Naive thymus-derived CD4-positive, alpha-beta T cell (primary cell): ENCODE measurements at regions of chr13 and their contacts with region 1.

Region 1: DNA sequence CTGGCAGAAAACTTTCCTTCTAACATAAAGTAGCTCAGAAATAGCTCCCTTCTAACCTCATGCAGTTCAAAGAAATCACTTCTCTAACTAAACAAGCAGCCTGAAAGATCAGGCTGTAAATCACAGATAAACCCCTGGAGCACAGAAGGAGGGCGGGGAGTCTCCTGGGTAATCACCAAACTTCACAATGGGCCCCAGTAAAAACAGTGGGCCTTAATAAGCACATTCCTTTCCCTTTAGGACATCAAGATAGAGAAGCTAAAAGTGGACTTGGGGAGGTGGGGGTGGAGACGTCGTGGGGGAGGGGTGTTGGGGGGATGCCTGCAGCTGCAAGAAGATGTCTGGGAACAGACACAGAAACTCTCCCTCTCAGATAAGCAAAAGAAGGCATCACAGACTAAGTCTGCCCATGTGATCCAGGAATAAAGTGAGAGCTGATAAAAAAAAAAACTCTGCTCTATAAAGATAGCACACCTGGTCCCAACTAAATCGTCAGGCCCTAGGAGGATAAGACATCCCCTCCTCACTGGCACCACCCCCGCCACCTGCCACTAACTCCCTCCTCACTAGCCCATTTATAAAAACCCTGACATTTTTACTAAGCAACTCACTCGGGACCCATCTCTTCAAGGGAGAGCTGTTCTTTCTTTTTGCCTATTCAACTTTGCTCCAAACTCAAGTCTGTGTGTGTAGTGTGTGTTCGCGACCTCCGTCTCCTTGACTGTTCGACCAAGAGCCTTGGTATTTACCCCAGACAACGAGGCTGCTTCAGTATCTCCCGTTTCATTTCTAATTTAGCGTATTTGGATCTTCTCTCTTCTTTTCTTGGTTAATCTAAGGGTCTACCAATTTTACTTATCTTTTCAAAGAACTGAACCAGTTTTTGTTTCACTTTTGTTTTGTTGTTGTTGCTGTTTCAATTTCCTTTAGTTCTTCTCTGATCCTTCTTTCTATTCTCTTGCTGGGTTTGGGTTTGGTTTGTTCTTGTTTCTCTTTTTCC is 31.7 kb downstream of the DNAJC15 start:
- DNase-seq: peak in 7 of 9 donors; percentile 30 to 58 (median 49)
- ATAC-seq: peak; percentile 52
- H3K4me3 ChIP-seq: peak overlapping the region; percentile 62
- H3K4me3 Mint-ChIP-seq: no peak overlapping the region
- H3K27ac ChIP-seq: peak overlapping the region; percentile 78
- H3K27ac Mint-ChIP-seq: no peak overlapping the region
- H3K4me1 ChIP-seq: peaks cover 28 to 43% of the 10 kb centered on the region in 2 donors
- H3K4me1 Mint-ChIP-seq: peaks cover 5 to 38% (median 22%) of the 10 kb centered on the region in 7 donors
- H3K27me3 ChIP-seq: no peaks in the 10 kb centered on the region
- H3K27me3 Mint-ChIP-seq: no peaks in the 10 kb centered on the region

Region 2: GRCh38 chr13:42707586-42707985 is 347.5 kb before region 1 on chr13:
- CTCF ChIA-PET with region 1: no interaction called
- POLR2A ChIA-PET with region 1: no interaction called
- intact Hi-C with region 1: no loop called
- DNase-seq: no peak
- ATAC-seq: no peak
- H3K4me3 ChIP-seq: no peak overlapping the region
- H3K4me3 Mint-ChIP-seq: no peak overlapping the region
- H3K27ac ChIP-seq: no peak overlapping the region
- H3K27ac Mint-ChIP-seq: no peak overlapping the region
- H3K4me1 ChIP-seq: no peaks in the 10 kb centered on the region
- H3K4me1 Mint-ChIP-seq: no peaks in the 10 kb centered on the region
- H3K27me3 ChIP-seq: no peaks in the 10 kb centered on the region
- H3K27me3 Mint-ChIP-seq: peaks cover 6 to 28% (median 14%) of the 10 kb centered on the region in 5 donors

Region 3: GRCh38 chr13:42991892-42992763 is 63.0 kb before region 1 on chr13 and contains the start of gene EPSTI1:
- CTCF ChIA-PET with region 1: interaction called, 3 read pairs
- POLR2A ChIA-PET with region 1: interaction called, 64 read pairs
- intact Hi-C with region 1: loop called (anchors 1 kb)
- DNase-seq: peak; percentile 61 to 84 (median 77)
- ATAC-seq: peak; percentile 88
- H3K4me3 ChIP-seq: peak within 1 kb of the TSS; percentile 77
- H3K4me3 Mint-ChIP-seq: peak within 1 kb of the TSS; percentile 92 to 98 (median 96)
- H3K27ac ChIP-seq: peak within 1 kb of the TSS; percentile 94
- H3K27ac Mint-ChIP-seq: peak within 1 kb of the TSS; percentile 99 to 100 (median 100)
- H3K4me1 ChIP-seq: peaks cover 13 to 15% of the 10 kb centered on the region in 2 donors
- H3K4me1 Mint-ChIP-seq: peaks cover 27 to 73% (median 51%) of the 10 kb centered on the region in 7 donors
- H3K27me3 ChIP-seq: no peaks in the 10 kb centered on the region
- H3K27me3 Mint-ChIP-seq: no peaks in the 10 kb centered on the region
- total RNA-seq, gene EPSTI1: 8.4 to 125 (median 11.0) TPM

Region 4: GRCh38 chr13:43023289-43023951 is 31.7 kb before region 1 on chr13 and contains the start of gene DNAJC15:
- CTCF ChIA-PET with region 1: interaction called, 4 read pairs
- POLR2A ChIA-PET with region 1: interaction called, 3 read pairs
- intact Hi-C with region 1: loop called (anchors 1 kb)
- DNase-seq: peak; percentile 72 to 88 (median 80)
- ATAC-seq: peak; percentile 93
- H3K4me3 ChIP-seq: peak within 1 kb of the TSS; percentile 87
- H3K4me3 Mint-ChIP-seq: peak within 1 kb of the TSS; percentile 92 to 100 (median 99)
- H3K27ac ChIP-seq: peak within 1 kb of the TSS; percentile 83
- H3K27ac Mint-ChIP-seq: peak within 1 kb of the TSS; percentile 92 to 99 (median 98)
- H3K4me1 ChIP-seq: peaks cover 9 to 20% of the 10 kb centered on the region in 2 donors
- H3K4me1 Mint-ChIP-seq: peaks cover 20 to 47% (median 38%) of the 10 kb centered on the region in 7 donors
- H3K27me3 ChIP-seq: no peaks in the 10 kb centered on the region
- H3K27me3 Mint-ChIP-seq: no peaks in the 10 kb centered on the region
- total RNA-seq, gene DNAJC15: 5.0 to 18.3 (median 10.5) TPM

Region 5: DNA sequence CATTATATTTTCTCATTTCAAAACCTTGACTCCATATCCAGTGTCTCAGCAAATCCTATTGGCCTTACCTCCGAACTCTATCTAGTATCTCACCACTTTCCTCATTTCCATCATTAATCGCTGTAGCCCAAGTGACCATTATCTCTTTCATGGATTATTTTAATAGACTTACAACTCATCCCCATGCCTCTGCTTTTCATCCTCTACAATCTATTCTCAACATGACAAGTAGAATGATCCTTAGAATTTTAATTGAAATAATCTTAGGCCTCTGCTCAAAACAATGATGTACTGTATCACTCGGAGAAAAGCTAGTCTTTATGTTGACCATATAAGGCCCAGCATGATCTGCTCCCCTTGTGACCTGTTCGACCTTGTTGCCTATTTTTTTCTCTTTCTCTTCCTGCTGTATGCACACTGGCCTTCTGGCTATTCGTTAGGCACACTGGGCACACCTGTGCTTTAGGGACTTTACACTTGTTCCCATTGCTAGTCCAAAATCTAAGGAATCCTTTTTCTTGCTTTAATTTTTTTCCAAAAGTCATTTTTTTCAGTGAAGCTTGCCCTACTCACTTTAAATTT is 10.3 kb before region 1 on chr13:
- CTCF ChIA-PET with region 1: interaction called, 4 read pairs
- POLR2A ChIA-PET with region 1: interaction called, 7 read pairs
- intact Hi-C with region 1: loop called in 1 of 2 experiments (anchors 1 kb)
- DNase-seq: no peak
- ATAC-seq: no peak
- H3K4me3 ChIP-seq: no peak overlapping the region
- H3K4me3 Mint-ChIP-seq: peak overlapping the region in 8 of 10 donors; percentile 2 to 49 (median 14)
- H3K27ac ChIP-seq: peak overlapping the region; percentile 1
- H3K27ac Mint-ChIP-seq: peak overlapping the region; percentile 0 to 88 (median 53)
- H3K4me1 ChIP-seq: peaks cover 15 to 16% of the 10 kb centered on the region in 2 donors
- H3K4me1 Mint-ChIP-seq: peaks cover 32 to 84% (median 71%) of the 10 kb centered on the region in 7 donors
- H3K27me3 ChIP-seq: no peaks in the 10 kb centered on the region
- H3K27me3 Mint-ChIP-seq: no peaks in the 10 kb centered on the region

Region 6: GRCh38 chr13:43074824-43075510 is 19.9 kb after region 1 on chr13:
- CTCF ChIA-PET with region 1: interaction called, 3 read pairs
- POLR2A ChIA-PET with region 1: interaction called, 3 read pairs
- intact Hi-C with region 1: loop called in 1 of 2 experiments (anchors 2 kb)
- DNase-seq: no peak
- ATAC-seq: no peak
- H3K4me3 ChIP-seq: no peak overlapping the region
- H3K4me3 Mint-ChIP-seq: peak overlapping the region in 9 of 10 donors; percentile 1 to 68 (median 41)
- H3K27ac ChIP-seq: no peak overlapping the region
- H3K27ac Mint-ChIP-seq: peak overlapping the region in 3 of 9 donors; percentile 14 to 30 (median 23)
- H3K4me1 ChIP-seq: peaks cover 0 to 5% of the 10 kb centered on the region in 2 donors
- H3K4me1 Mint-ChIP-seq: peaks cover 18 to 64% (median 51%) of the 10 kb centered on the region in 7 donors
- H3K27me3 ChIP-seq: no peaks in the 10 kb centered on the region
- H3K27me3 Mint-ChIP-seq: no peaks in the 10 kb centered on the region

Region 7: DNA sequence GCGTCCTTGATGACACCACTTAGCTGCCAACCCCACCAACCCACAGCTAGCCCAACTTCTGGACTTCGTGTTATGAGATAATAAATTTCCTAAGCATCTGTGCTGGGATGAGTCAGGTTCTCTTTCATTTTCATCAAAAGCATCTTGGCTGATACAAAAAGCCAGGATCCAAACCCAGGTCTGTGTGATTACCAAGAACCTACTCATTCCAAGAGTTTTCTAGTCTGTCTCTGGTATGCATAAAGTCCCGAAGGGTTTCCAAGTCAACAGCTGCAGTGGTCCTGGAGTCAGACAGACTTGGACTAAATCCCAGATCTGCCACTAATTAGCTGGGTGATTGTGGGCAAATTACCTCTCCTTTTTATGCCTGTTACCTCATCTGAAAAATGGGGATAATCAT is 1263.1 kb after region 1 on chr13:
- CTCF ChIA-PET with region 1: no interaction called
- POLR2A ChIA-PET with region 1: no interaction called
- intact Hi-C with region 1: no loop called
- DNase-seq: no peak
- ATAC-seq: no peak
- H3K4me3 ChIP-seq: no peak overlapping the region
- H3K4me3 Mint-ChIP-seq: no peak overlapping the region
- H3K27ac ChIP-seq: no peak overlapping the region
- H3K27ac Mint-ChIP-seq: no peak overlapping the region
- H3K4me1 ChIP-seq: no peaks in the 10 kb centered on the region
- H3K4me1 Mint-ChIP-seq: peaks cover 0 to 4% (median 0%) of the 10 kb centered on the region in 7 donors
- H3K27me3 ChIP-seq: no peaks in the 10 kb centered on the region
- H3K27me3 Mint-ChIP-seq: peaks cover 5 to 27% (median 15%) of the 10 kb centered on the region in 5 donors